ENCODE measurements at regions of chr19 and their contacts with region 1.

Region 1: GRCh38 chr19:40570313-40571004 is 6.2 kb upstream of the SHKBP1 start:
- DNase-seq: peak; percentile 98
- ATAC-seq: peak; percentile 95
- H3K4me3 Mint-ChIP-seq: peak overlapping the region; percentile 70
- H3K27ac Mint-ChIP-seq: peak overlapping the region; percentile 81
- H3K4me1 Mint-ChIP-seq: peaks cover 22% of the 10 kb centered on the region
- H3K27me3 Mint-ChIP-seq: peaks cover 13% of the 10 kb centered on the region
- CTCF ChIP-seq: no peak

Region 2: GRCh38 chr19:40529093-40529954 is 41.1 kb before region 1 on chr19:
- CTCF ChIA-PET with region 1: interaction called, 3 read pairs
- POLR2A ChIA-PET with region 1: interaction called, 3 read pairs
- intact Hi-C with region 1: loop called (anchors 1 kb)
- DNase-seq: peak; percentile 91
- ATAC-seq: peak; percentile 91
- H3K4me3 Mint-ChIP-seq: peak overlapping the region; percentile 42
- H3K27ac Mint-ChIP-seq: no peak overlapping the region
- H3K4me1 Mint-ChIP-seq: peaks cover 18% of the 10 kb centered on the region
- H3K27me3 Mint-ChIP-seq: peaks cover 33% of the 10 kb centered on the region
- CTCF ChIP-seq: no peak

Region 3: DNA sequence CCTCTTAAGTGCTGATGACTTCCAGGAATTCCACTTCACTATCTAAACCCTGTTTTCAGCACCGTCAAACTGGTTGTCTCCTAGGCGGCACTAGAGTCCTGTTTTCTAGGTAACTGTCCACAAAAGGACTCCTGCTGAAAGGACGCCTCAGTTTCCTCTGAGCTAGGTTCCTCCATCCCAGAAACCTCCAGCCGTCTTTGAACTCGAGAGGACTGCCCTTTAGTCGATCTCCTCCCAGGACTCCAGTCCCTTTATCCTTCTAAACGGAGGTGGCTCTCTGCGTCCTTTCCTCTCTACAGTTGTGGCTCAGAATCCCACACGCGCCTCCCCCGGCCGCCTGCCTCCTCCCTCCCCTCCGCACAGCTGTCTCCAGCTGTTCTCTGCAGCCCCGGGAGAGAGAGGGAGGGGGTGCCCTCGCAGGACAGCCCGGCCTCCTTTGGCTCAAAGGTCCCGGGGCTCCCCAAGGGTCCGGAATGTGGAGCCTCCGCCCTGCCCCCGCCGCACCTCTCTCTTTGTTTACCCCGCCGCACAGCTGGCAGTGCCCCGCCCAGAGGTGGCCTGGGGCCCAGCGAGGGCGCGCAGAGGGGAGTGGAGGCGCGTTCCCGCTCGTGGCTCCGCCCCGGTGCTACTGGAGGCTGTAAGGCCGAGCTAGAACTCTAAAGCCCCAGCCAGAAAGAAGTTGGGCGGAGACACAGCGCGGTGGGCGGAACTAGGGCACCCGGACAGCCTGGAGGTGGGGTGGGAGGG is 33.1 kb after region 1 on chr19:
- CTCF ChIA-PET with region 1: interaction called, 21 read pairs
- POLR2A ChIA-PET with region 1: interaction called, 25 read pairs
- intact Hi-C with region 1: no loop called
- DNase-seq: peak; percentile 90
- ATAC-seq: peak; percentile 72
- H3K4me3 Mint-ChIP-seq: peak overlapping the region; percentile 85
- H3K27ac Mint-ChIP-seq: peak overlapping the region; percentile 77
- H3K4me1 Mint-ChIP-seq: peaks cover 69% of the 10 kb centered on the region
- H3K27me3 Mint-ChIP-seq: peaks cover 22% of the 10 kb centered on the region
- CTCF ChIP-seq: no peak

Region 4: DNA sequence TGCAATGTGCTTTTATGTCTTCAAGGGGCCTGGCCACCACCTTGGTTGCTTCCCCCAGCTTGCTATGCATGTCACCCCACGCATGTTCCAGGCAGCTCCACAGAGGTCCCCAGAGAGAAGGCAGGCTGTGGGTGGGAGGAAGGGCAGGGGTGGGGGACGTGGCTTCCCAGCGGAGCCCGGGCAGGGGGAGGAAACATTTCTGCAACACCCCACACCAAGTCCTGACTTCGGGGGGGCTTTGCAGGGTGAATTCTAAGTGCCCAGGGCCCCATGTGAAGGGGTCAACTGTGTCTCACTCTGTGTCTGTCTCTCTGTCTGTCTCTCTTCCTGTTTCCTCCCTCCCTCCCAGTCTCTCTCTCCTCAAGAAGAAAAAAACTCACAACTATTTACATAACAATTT is 70.3 kb after region 1 on chr19:
- CTCF ChIA-PET with region 1: interaction called, 18 read pairs
- POLR2A ChIA-PET with region 1: interaction called, 3 read pairs
- intact Hi-C with region 1: loop called (anchors 2 kb)
- DNase-seq: no peak
- ATAC-seq: peak; percentile 31
- H3K4me3 Mint-ChIP-seq: no peak overlapping the region
- H3K27ac Mint-ChIP-seq: no peak overlapping the region
- H3K4me1 Mint-ChIP-seq: peaks cover 13% of the 10 kb centered on the region
- H3K27me3 Mint-ChIP-seq: peaks cover 4% of the 10 kb centered on the region
- CTCF ChIP-seq: no peak